CD4-positive, alpha-beta T cell (primary cell): ENCODE measurements at regions of chr1 and their contacts with region 1.

Region 1: DNA sequence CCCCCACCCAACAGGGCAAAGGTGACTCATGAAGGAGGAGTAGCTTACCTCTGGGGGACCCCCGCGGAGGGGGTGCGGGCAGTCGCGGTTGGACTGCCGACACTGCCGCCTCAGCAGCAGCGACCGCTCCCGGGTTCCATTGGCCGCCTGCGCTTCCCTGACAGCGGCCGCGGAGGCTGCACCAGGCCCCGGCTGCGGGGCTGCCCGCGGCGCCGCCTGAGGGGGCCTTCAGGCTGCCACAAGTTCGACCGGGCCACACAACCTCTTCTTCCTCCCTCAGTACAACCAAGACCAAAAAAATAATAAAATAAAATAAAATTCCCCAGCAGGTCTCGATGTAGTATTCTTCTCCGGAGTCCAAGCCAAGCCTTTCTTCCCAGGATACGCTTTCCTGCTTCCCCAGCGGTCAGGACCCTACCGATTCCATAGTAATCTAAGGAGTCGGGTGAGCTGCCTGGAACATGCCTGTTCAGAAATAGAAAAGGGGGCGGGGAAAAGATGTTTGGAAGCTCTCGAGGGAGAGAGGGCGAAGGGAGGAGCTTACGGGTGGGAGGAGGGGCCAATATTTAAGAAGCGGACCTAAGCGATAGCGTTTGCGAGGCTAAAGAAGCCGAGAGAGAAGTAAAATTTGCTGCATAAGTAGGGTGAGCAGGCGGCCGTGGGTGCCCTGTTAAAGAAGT is at the start of gene PI4KB:
- DNase-seq: peak; percentile 76 to 97 (median 85)
- ATAC-seq: peak; percentile 94
- H3K4me3 ChIP-seq: peak within 1 kb of the TSS; percentile 75
- H3K4me3 Mint-ChIP-seq: peak within 1 kb of the TSS; percentile 95
- H3K27ac ChIP-seq: peak within 1 kb of the TSS; percentile 84 to 96
- H3K27ac Mint-ChIP-seq: peak within 1 kb of the TSS; percentile 93
- H3K4me1 ChIP-seq: peaks cover 35% of the 10 kb centered on the region
- H3K4me1 Mint-ChIP-seq: peaks cover 33% of the 10 kb centered on the region
- H3K27me3 ChIP-seq: no peaks in the 10 kb centered on the region
- H3K27me3 Mint-ChIP-seq: no peaks in the 10 kb centered on the region
- CTCF ChIP-seq: no peak
- total RNA-seq, gene PI4KB: 50.2 to 51.0 TPM

Region 2: GRCh38 chr1:150696590-150697524 is 630.5 kb before region 1 on chr1 and contains the start of gene GOLPH3L:
- CTCF ChIA-PET with region 1: no interaction called
- POLR2A ChIA-PET with region 1: no interaction called
- intact Hi-C with region 1: loop called in 1 of 2 experiments (anchors 10 kb)
- DNase-seq: peak; percentile 73 to 98 (median 83)
- ATAC-seq: peak; percentile 99
- H3K4me3 ChIP-seq: peak within 1 kb of the TSS; percentile 69
- H3K4me3 Mint-ChIP-seq: peak within 1 kb of the TSS; percentile 94
- H3K27ac ChIP-seq: peak within 1 kb of the TSS; percentile 39 to 62
- H3K27ac Mint-ChIP-seq: peak within 1 kb of the TSS; percentile 88
- H3K4me1 ChIP-seq: no peaks in the 10 kb centered on the region
- H3K4me1 Mint-ChIP-seq: peaks cover 40% of the 10 kb centered on the region
- H3K27me3 ChIP-seq: no peaks in the 10 kb centered on the region
- H3K27me3 Mint-ChIP-seq: peaks cover 4% of the 10 kb centered on the region
- CTCF ChIP-seq: no peak
- total RNA-seq, gene GOLPH3L: 2.4 to 2.6 TPM

Region 3: GRCh38 chr1:151340870-151341754 is 13.7 kb after region 1 on chr1:
- CTCF ChIA-PET with region 1: interaction called, 41 read pairs
- POLR2A ChIA-PET with region 1: interaction called, 29 read pairs
- intact Hi-C with region 1: loop called in 1 of 2 experiments (anchors 1 kb)
- DNase-seq: peak in 10 of 14 experiments; percentile 12 to 85 (median 38)
- ATAC-seq: peak; percentile 93
- H3K4me3 ChIP-seq: no peak overlapping the region
- H3K4me3 Mint-ChIP-seq: no peak overlapping the region
- H3K27ac ChIP-seq: no peak overlapping the region
- H3K27ac Mint-ChIP-seq: peak overlapping the region; percentile 7
- H3K4me1 ChIP-seq: peaks cover 20% of the 10 kb centered on the region
- H3K4me1 Mint-ChIP-seq: peaks cover 21% of the 10 kb centered on the region
- H3K27me3 ChIP-seq: no peaks in the 10 kb centered on the region
- H3K27me3 Mint-ChIP-seq: no peaks in the 10 kb centered on the region
- CTCF ChIP-seq: peak; percentile 85

Region 4: GRCh38 chr1:151346769-151347522 is 19.6 kb after region 1 on chr1 and contains the start of gene RFX5:
- CTCF ChIA-PET with region 1: no interaction called
- POLR2A ChIA-PET with region 1: interaction called, 16 read pairs
- intact Hi-C with region 1: loop called (anchors 1 kb)
- DNase-seq: peak; percentile 85 to 99 (median 90)
- ATAC-seq: peak; percentile 93
- H3K4me3 ChIP-seq: peak within 1 kb of the TSS; percentile 81
- H3K4me3 Mint-ChIP-seq: peak within 1 kb of the TSS; percentile 94
- H3K27ac ChIP-seq: peak within 1 kb of the TSS; percentile 97 to 98
- H3K27ac Mint-ChIP-seq: peak within 1 kb of the TSS; percentile 94
- H3K4me1 ChIP-seq: peaks cover 33% of the 10 kb centered on the region
- H3K4me1 Mint-ChIP-seq: peaks cover 30% of the 10 kb centered on the region
- H3K27me3 ChIP-seq: no peaks in the 10 kb centered on the region
- H3K27me3 Mint-ChIP-seq: no peaks in the 10 kb centered on the region
- CTCF ChIP-seq: no peak
- total RNA-seq, gene RFX5: 62.0 to 65.7 TPM

Region 5: GRCh38 chr1:151399890-151400495 is 72.6 kb after region 1 on chr1:
- CTCF ChIA-PET with region 1: interaction called, 5 read pairs
- POLR2A ChIA-PET with region 1: interaction called, 25 read pairs
- intact Hi-C with region 1: loop called in 1 of 2 experiments (anchors 5 kb)
- DNase-seq: peak in 4 of 14 experiments; percentile 15 to 49 (median 39)
- ATAC-seq: peak; percentile 1
- H3K4me3 ChIP-seq: peak overlapping the region; percentile 99
- H3K4me3 Mint-ChIP-seq: peak overlapping the region; percentile 93
- H3K27ac ChIP-seq: peak overlapping the region; percentile 91 to 97
- H3K27ac Mint-ChIP-seq: peak overlapping the region; percentile 93
- H3K4me1 ChIP-seq: peaks cover 29% of the 10 kb centered on the region
- H3K4me1 Mint-ChIP-seq: peaks cover 27% of the 10 kb centered on the region
- H3K27me3 ChIP-seq: no peaks in the 10 kb centered on the region
- H3K27me3 Mint-ChIP-seq: no peaks in the 10 kb centered on the region
- CTCF ChIP-seq: no peak